CD14-positive monocyte (primary cell): ENCODE measurements at regions of chr1 and their contacts with region 1.

Region 1: GRCh38 chr1:199691540-199691939 is 336.0 kb upstream of the NR5A2 start:
- DNase-seq: peak; percentile 76 to 86 (median 85)
- H3K4me3 ChIP-seq: peak overlapping the region in 1 of 3 experiments; percentile 50
- H3K4me3 Mint-ChIP-seq: peak overlapping the region in 1 of 2 donors; percentile 67
- H3K27ac ChIP-seq: peak overlapping the region; percentile 38 to 50
- H3K27ac Mint-ChIP-seq: peak overlapping the region; percentile 68 to 96 (median 88)
- H3K4me1 ChIP-seq: peaks cover 24 to 31% of the 10 kb centered on the region in 2 donors
- H3K4me1 Mint-ChIP-seq: peaks cover 31% of the 10 kb centered on the region
- H3K27me3 ChIP-seq: no peaks in the 10 kb centered on the region
- H3K27me3 Mint-ChIP-seq: peaks cover 0 to 1% (median 0%) of the 10 kb centered on the region in 3 donors
- CTCF ChIP-seq: no peak

Region 2: GRCh38 chr1:199735660-199736059 is 44.1 kb after region 1 on chr1:
- intact Hi-C with region 1: loop called in 1 of 2 experiments (anchors 5 kb)
- DNase-seq: no peak
- H3K4me3 ChIP-seq: no peak overlapping the region
- H3K4me3 Mint-ChIP-seq: no peak overlapping the region
- H3K27ac ChIP-seq: no peak overlapping the region
- H3K27ac Mint-ChIP-seq: peak overlapping the region in 5 of 7 donors; percentile 13 to 74 (median 40)
- H3K4me1 ChIP-seq: peaks cover 0 to 5% of the 10 kb centered on the region in 2 donors
- H3K4me1 Mint-ChIP-seq: peaks cover 11% of the 10 kb centered on the region
- H3K27me3 ChIP-seq: no peaks in the 10 kb centered on the region
- H3K27me3 Mint-ChIP-seq: peaks cover 0 to 3% (median 0%) of the 10 kb centered on the region in 3 donors
- CTCF ChIP-seq: no peak

Region 3: GRCh38 chr1:199859491-199859933 is 168.0 kb after region 1 on chr1:
- intact Hi-C with region 1: loop called in 1 of 2 experiments (anchors 5 kb)
- DNase-seq: peak; percentile 91 to 98 (median 96)
- H3K4me3 ChIP-seq: peak overlapping the region in 1 of 3 experiments; percentile 40
- H3K4me3 Mint-ChIP-seq: peak overlapping the region in 1 of 2 donors; percentile 56
- H3K27ac ChIP-seq: peak overlapping the region; percentile 45 to 89
- H3K27ac Mint-ChIP-seq: peak overlapping the region; percentile 83 to 98 (median 96)
- H3K4me1 ChIP-seq: peaks cover 63 to 69% of the 10 kb centered on the region in 2 donors
- H3K4me1 Mint-ChIP-seq: peaks cover 54% of the 10 kb centered on the region
- H3K27me3 ChIP-seq: no peaks in the 10 kb centered on the region
- H3K27me3 Mint-ChIP-seq: peaks cover 0 to 1% (median 0%) of the 10 kb centered on the region in 3 donors
- CTCF ChIP-seq: no peak